ENCODE measurements at regions of chrX and their contacts with region 1.

Region 1: DNA sequence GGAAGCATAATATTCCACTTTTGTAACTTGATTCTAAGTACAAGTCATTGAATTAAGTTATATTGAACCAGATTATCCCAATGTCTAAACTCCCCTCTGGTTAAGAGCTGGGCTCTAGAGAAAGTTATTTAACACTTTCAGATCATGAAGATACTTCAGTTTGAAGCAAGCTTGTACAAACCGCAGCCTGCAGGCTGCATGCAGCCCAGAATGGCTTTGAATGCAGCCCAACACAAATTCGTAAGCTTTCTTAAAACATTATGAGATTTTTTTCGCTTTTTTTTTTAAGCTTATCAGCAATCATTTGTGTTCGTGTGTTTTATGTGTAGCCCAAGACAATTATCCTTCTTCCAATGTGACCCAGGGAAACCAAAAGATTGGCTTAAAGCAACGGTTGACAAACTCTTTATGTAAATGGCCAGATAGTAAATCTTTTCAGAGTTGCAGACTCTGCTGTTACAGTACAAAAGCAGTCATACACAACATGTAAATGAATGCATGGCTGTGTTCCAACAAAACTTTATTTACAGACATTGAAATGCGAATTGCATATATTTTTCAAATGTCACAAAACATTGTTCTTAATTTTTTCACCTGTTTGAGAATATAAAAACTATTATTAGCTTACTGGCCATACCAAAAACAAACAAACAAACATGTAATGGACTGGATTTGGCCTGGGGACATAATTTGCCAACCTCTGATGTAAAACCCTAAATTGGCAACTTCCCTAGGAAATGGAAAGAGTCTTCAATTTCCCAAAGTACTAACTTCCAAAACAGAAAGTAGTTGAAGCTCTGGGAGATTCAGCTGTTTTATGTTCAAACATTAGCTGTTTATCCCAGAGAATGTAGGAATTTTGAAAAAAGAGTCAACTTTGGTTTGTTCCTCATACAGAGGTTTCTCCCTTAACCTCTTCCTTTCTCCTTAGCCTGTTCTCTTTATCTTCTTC is 201.1 kb upstream of the MBNL3 start:
- DNase-seq: no peak

Region 2: DNA sequence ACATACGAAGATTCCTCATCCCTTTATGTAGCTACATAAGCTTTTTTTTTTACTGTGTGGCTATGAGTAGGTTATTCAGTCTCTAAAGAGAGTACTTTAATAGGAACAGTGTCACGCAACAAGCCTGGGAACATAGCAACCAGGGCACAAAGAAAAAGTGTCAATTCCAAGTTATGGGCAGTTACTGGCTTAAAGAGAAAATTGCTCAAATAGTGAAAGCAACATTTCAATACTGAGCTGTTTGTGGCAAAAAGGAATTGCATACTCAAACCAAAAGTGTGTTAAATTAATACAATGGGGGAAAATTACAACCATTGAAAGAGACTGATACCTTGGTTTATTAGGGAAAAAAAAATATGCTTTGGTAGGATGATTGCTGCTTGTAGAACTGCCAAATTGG is 1745.7 kb before region 1 on chrX:
- intact Hi-C with region 1: loop called in 1 of 2 experiments (anchors 5 kb)
- DNase-seq: no peak

Region 3: GRCh38 chrX:132505116-132505515 is 184.8 kb before region 1 on chrX:
- intact Hi-C with region 1: no loop called
- DNase-seq: no peak

Measured in posterior vena cava (tissue), 2 donors.